ENCODE measurements at regions of chr1 and their contacts with region 1.

Region 1: GRCh38 chr1:219416594-219417238 is 196.2 kb downstream of the ZC3H11B start:
- DNase-seq: peak; percentile 40
- H3K4me3 ChIP-seq: no peak overlapping the region
- H3K27ac ChIP-seq: no peak overlapping the region
- H3K4me1 ChIP-seq: no peaks in the 10 kb centered on the region
- H3K27me3 ChIP-seq: peaks cover 3% of the 10 kb centered on the region
- CTCF ChIP-seq: peak; percentile 70 to 78

Region 2: DNA sequence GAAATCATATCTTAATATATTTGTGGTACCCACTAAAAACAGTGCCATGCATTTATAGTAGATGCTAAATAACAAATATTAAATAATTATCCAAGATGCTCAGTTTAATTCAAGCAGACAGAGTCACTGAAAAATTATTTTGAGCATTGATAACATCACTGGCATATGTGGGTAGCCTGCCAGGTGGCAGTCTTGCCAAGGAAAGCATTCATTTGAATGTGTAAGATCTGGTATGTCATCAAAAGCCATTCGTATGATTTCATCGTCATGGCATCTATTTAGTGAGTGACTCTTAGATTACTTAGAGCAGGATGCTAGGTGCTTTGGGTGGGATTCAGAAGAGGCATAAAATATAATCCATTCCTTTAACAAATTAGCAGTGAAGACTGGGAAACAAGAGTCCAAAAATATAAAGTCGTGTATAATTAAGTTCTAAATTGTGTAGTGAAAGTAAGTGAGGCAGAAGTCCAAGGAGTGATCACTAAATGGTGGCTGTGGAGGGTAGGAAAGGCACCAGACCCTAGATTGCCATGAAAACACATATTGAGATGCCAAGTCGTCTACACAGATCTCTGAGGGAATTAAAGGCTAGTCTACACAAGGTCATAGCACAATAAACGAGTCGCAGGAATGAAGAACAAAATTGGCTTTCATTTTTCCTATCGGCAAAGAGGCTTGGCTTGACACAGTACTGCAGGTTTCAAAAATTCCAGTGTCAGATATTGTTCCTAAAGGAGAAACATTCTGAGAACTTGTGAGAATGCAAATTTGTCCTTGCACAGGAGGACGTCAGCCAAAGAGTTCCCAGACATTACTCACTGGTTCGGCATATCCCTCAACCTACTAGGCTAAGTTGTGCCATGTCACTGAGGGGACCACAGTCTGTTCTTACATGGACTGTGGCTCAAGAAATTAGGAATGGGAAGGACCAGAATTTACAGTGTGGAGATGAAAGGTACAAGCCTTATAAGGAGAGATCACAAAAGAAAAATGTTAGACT is 112.2 kb before region 1 on chr1:
- CTCF ChIA-PET with region 1: no interaction called
- dilution Hi-C with region 1: no loop called
- in situ Hi-C with region 1: no loop called
- intact Hi-C with region 1: loop called (anchors 1 kb)
- DNase-seq: peak; percentile 43
- H3K4me3 ChIP-seq: no peak overlapping the region
- H3K27ac ChIP-seq: no peak overlapping the region
- H3K4me1 ChIP-seq: peaks cover 7% of the 10 kb centered on the region
- H3K27me3 ChIP-seq: peaks cover 32% of the 10 kb centered on the region
- CTCF ChIP-seq: peak; percentile 23 to 49

Measured in mammary epithelial cell (primary cell).